ENCODE measurements at regions of chr17 and their contacts with region 1.

Region 1: DNA sequence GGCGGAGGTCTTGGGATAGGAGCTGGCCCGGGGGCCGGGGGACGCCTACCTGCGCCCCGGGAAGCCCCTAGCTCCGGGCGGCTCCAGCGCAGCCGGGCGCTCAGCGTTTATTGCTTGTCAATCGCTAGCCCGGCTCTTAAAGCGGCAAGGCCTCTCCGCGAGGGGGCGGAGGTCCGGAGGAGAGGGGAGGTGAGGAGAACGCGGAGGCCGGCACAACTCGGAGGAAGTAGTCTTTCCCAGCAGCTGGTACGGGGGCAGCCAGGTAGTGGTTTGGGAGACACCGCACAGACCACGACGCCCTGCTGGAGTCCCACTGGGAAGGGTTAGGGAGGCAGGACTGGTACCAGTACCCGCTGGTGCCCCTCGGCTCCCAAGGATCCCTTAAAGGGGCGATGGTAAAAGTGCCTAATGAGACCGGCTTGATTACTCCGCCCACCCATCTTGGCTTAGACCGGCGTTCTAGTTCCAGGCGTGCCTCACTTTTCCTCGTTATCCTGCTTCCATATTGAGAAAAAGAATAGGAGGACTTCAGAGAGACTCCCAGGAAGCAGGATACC is at the start of gene MPP2:
- H3K4me3 ChIP-seq: peak within 1 kb of the TSS; percentile 47
- H3K27ac ChIP-seq: peak within 1 kb of the TSS; percentile 51; the same call in 1 of the 2 replicates
- H3K4me1 ChIP-seq: peaks cover 12% of the 10 kb centered on the region; the same call in 1 of the 2 replicates
- CTCF ChIP-seq: 0 out of 2 replicates have a peak, but pooled peaks have one; percentile 62

Region 2: DNA sequence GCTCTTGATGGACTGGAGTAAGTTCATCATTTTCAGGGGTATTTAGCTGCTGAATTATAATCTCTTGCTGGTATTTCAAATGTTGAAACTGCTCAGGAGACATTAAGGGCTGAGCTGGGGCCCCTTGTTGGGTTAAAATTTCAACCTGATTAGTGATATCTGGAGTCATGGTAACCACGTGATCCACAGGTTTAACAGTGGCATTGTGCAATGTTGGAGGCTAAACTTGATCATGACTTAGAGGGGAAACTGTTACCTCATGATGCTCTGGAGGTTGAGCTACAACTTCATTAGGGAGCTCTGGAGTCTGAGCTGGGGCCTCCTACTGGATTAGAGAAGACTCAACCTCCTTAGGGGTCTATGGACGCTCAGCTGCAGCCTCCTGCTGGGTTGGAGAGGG is 17.1 kb after region 1 on chr17:
- CTCF ChIA-PET with region 1: interaction called, 39 read pairs
- POLR2A ChIA-PET with region 1: interaction called, 3 read pairs
- H3K4me3 ChIP-seq: no peak overlapping the region
- H3K27ac ChIP-seq: no peak overlapping the region
- H3K4me1 ChIP-seq: no peaks in the 10 kb centered on the region
- CTCF ChIP-seq: no peak

Region 3: DNA sequence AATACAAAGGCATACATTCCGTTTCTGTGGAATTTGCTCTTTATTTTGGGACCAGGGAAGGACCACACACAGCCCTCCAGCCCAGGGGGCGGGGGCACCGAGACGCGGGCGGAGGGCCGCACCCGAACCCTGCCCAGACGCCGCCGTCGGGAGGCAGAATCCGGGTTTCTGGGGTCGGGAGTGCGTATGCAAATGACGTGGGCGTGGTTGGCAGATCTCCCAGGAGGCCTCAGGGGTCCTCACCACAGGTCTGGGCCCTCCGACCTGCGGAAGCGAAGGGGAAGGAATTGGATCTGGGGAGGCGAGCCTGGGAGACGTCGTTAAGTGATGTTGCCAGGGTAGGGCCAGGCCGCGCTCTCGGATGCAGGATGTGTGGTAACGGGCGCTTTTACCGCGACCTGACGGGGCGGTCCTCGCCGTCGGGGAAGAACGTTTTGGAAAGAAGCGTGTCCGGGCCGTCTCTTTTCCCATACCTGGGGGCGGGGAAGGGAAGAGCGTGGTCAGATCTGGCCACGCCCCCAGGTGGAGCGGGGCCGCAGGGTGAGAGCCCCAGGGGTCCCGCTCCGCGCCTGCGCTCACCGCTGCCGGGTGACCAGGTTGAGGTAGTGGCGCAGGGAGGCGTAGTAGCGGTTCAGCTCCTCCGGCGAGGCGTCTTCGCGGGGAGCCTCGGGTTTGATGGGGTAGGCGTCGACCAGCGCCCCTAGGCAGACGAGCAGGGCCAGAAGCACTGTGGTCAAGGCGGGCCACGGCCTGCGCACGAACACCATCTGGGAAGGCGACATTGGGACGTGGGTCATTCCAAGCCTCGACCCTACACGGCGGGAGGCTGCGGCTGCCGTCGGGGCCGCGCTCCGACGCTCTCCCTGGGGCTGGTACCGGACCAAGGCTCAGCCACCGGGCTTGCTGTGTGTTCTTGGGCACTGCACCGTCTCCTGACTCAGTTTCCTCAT is 45.5 kb after region 1 on chr17:
- CTCF ChIA-PET with region 1: interaction called, 10 read pairs
- POLR2A ChIA-PET with region 1: no interaction called
- H3K4me3 ChIP-seq: no peak overlapping the region
- H3K27ac ChIP-seq: no peak overlapping the region
- H3K4me1 ChIP-seq: no peaks in the 10 kb centered on the region; the same call in 1 of the 2 replicates
- CTCF ChIP-seq: no peak